Heart left ventricle (tissue), 16 donors: ENCODE measurements at regions of chr1 and their contacts with region 1.

Region 1: GRCh38 chr1:224113918-224114786 is at the start of gene FBXO28:
- DNase-seq: peak; percentile 96 to 97 (median 96)
- ATAC-seq: peak; percentile 96 to 100 (median 100)
- H3K4me3 ChIP-seq: peak within 1 kb of the TSS; percentile 62 to 96 (median 84)
- H3K27ac ChIP-seq: peak within 1 kb of the TSS; percentile 77 to 98 (median 92)
- H3K4me1 ChIP-seq: peaks cover 0 to 29% (median 22%) of the 10 kb centered on the region in 12 donors
- H3K27me3 ChIP-seq: peaks cover 0 to 2% (median 0%) of the 10 kb centered on the region in 9 donors
- CTCF ChIP-seq: peak in 1 of 12 donors; percentile 3
- POLR2A ChIP-seq: peak; percentile 20 to 82
- total RNA-seq, gene FBXO28: 17.0 to 24.5 (median 19.3) TPM

Region 2: GRCh38 chr1:224182866-224183590 is 68.9 kb after region 1 on chr1 and contains the start of gene DEGS1:
- intact Hi-C with region 1: loop called in 1 of 10 experiments (anchors 2 kb)
- DNase-seq: peak; percentile 80 to 92 (median 84)
- ATAC-seq: peak; percentile 78 to 96 (median 94)
- H3K4me3 ChIP-seq: peak within 1 kb of the TSS; percentile 72 to 100 (median 87)
- H3K27ac ChIP-seq: peak within 1 kb of the TSS; percentile 69 to 98 (median 96)
- H3K4me1 ChIP-seq: peaks cover 0 to 39% (median 18%) of the 10 kb centered on the region in 12 donors
- H3K27me3 ChIP-seq: no peaks in the 10 kb centered on the region
- CTCF ChIP-seq: no peak
- POLR2A ChIP-seq: peak in 1 of 2 donors; percentile 96
- total RNA-seq, gene DEGS1: 35.8 to 75.2 (median 46.3) TPM

Region 3: DNA sequence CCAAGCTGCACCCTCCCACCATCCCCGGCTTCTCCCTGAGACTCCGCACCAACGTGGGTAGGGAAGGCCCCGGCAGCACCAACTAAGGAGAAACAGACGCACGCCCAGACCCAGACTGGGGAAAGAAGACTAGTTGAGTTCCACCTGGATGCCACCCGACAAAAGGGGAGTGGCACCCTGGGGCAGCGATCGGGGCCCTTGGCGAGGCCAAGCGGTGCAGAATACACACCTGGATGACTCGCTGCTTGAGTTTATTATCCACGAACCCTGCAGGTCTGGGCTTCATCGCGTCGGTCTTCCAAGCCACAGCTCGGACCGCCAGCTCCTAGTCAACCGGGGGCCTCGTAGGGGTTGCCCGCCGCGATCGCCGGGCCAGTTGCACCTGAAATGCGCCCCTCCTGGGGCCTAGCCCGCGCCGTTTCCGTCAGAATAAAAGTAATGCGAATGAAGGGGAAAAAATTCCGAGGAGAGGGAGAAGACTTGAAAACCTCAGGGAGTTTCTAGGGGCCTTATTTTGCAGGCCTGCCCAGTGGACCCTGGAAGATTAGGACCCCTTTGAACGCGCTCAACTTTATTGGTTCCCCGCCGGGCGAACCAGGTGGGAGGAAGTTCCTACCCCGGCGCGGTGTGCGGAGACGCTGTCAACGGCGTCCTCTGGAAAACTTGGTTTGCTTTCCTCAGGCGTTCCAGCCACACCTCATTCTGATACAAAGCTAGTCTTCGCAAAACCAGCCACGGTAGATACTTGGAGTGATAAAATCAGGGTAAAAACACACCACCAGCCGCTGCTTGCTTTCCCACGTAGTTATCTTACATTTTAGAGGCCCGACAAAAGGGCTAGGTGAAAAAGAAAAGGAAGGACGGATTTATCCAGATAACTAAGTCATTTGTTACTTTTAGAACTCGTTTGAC is 215.9 kb after region 1 on chr1 and contains the start of gene NVL:
- intact Hi-C with region 1: loop called (anchors 1 to 5 kb)
- DNase-seq: peak; percentile 85 to 90 (median 88)
- ATAC-seq: peak; percentile 93 to 98 (median 98)
- H3K4me3 ChIP-seq: peak within 1 kb of the TSS; percentile 51 to 98 (median 88)
- H3K27ac ChIP-seq: peak within 1 kb of the TSS; percentile 88 to 98 (median 92)
- H3K4me1 ChIP-seq: peaks cover 0 to 28% (median 20%) of the 10 kb centered on the region in 12 donors
- H3K27me3 ChIP-seq: no peaks in the 10 kb centered on the region
- CTCF ChIP-seq: peak in 1 of 12 donors; percentile 13
- POLR2A ChIP-seq: peak in 1 of 2 donors; percentile 56
- total RNA-seq, gene NVL: 4.8 to 14.8 (median 8.7) TPM

Region 4: GRCh38 chr1:224454397-224455066 is 340.4 kb after region 1 on chr1:
- intact Hi-C with region 1: loop called in 8 of 10 experiments (anchors 2 to 5 kb)
- DNase-seq: no peak
- ATAC-seq: no peak
- H3K4me3 ChIP-seq: no peak overlapping the region
- H3K27ac ChIP-seq: no peak overlapping the region
- H3K4me1 ChIP-seq: peaks cover 0 to 29% (median 19%) of the 10 kb centered on the region in 12 donors
- H3K27me3 ChIP-seq: no peaks in the 10 kb centered on the region
- CTCF ChIP-seq: no peak
- POLR2A ChIP-seq: no peak

Region 5: DNA sequence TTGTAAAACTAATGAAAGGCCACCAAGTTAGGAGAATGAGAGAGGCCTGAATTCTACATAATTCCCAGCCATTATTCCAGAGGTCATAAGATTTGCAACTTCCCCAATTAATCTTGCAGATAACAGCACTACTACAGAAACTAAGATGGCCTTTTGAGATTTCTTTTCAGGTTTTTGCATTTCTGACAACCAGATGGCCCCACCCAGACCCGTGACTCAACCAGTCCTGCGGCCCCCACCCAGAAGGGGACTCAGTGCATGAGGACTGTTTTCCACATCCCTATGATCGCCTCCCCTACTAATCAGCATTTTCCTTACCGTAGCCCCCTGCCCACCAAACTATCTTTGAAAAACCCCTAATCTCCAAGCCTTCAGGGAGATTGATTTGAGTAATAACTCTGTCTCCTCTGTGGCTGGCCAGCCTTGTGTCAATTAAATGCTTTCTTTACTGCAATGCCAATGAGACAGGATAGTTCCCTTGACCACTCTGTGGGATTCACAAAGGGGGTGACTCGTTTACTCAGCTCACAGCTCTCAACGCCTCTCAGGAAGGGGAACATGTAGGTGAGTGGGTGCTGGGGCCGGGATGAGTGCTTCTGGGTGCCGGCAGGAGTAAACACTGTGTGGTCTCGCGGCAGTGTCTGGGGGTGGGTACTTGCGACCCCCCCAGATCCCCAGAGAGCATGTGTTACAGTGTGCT is 491.5 kb after region 1 on chr1:
- intact Hi-C with region 1: no loop called
- DNase-seq: no peak
- ATAC-seq: no peak
- H3K4me3 ChIP-seq: no peak overlapping the region
- H3K27ac ChIP-seq: no peak overlapping the region
- H3K4me1 ChIP-seq: no peaks in the 10 kb centered on the region
- H3K27me3 ChIP-seq: peaks cover 0 to 5% (median 0%) of the 10 kb centered on the region in 9 donors
- CTCF ChIP-seq: no peak
- POLR2A ChIP-seq: no peak